ENCODE measurements at regions of chr18 and their contacts with region 1.

Region 1: DNA sequence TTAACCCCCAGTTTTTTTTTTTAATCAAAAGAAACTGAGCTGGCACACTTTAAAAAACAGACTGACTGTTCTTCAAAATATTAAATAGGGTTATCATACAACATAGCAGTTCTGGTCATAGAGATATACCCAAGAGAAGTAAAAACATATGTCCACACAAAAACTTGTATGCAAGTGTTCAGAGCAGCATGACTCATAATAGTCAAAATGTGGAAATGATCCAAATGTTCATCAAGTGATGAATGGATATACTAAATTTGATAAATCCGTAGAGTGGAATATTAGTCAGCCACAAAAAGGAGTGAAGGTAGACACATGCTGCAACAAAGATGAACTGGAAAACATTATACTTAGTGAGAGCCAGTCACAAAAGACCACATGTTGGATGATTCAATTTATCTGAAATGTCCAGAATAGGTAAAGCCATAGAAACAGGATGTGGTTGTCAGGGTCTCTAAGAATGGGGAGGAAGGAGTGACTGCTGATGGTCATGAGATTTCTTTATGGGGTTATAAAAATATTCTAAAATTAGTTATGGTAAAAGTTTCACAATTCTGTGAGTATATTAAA is 5.1 kb downstream of the SMIM21 start:
- DNase-seq: no peak
- ATAC-seq: no peak

Region 2: GRCh38 chr18:75374466-75374865 is 48.0 kb before region 1 on chr18:
- intact Hi-C with region 1: loop called (anchors 2 kb)
- DNase-seq: no peak
- ATAC-seq: no peak

Region 3: DNA sequence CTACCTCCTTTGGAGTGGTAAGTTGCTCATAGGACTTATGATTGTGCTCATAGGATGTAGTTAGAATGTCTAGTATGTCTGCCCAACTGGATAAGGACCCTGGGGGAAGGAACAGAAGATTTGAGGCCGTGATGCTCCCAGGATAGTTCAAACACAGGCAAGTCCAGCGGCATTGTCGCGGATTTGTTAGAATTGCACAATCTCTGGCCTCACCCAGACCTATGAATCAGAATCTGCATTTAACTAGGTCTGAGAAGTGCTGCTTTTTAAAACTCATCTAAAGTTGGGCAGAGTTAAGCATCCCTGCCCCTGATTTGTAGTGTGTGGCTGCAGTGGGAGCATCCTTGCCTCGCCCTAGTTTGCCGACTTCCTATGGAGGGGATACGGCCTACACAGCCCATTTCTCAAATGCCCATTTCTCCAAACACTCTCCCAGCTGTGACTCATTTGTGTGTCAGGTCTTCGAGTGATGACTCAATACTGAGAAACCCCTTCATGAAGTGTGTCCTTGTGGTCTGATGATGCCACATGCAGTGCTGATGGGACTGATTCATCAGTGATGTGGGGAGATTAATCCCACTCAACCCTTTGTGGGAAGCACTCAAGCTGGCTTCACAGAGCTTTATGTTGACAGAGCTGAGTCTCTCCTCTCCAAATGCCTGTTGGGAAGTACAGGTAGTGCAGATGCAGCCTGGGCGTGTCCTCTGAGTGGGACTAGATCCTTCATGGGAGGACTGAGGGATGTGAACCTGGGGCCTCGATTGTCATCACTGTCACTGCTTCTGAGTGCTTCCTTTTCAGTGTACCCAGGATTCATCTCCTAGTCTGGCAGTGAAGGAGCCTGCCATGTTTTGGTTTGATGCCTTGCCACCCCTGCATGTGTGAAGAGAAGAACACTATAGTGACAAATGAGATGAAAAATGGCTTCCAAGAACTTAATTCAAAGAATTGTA is 13.6 kb before region 1 on chr18:
- intact Hi-C with region 1: no loop called
- DNase-seq: no peak
- ATAC-seq: no peak

Measured in sciatic nerve (tissue), 2 donors.